Activated B cell treated with CpG ODN at 0.5 μM for 24 hours (primary cell): ENCODE measurements at regions of chr10 and their contacts with region 1.

Region 1: GRCh38 chr10:95693668-95694534 is at the start of gene TCTN3:
- DNase-seq: peak; percentile 87
- ATAC-seq: peak; percentile 94
- H3K4me3 Mint-ChIP-seq: peak within 1 kb of the TSS; percentile 98
- H3K27ac Mint-ChIP-seq: peak within 1 kb of the TSS; percentile 94
- H3K4me1 Mint-ChIP-seq: peaks cover 77% of the 10 kb centered on the region
- H3K27me3 Mint-ChIP-seq: no peaks in the 10 kb centered on the region
- CTCF ChIP-seq: peak; percentile 70
- total RNA-seq, gene TCTN3: 44.5 and 47.5 TPM in 2 replicates

Region 2: GRCh38 chr10:95374597-95375209 is 319.2 kb before region 1 on chr10:
- CTCF ChIA-PET with region 1: no interaction called
- POLR2A ChIA-PET with region 1: no interaction called
- intact Hi-C with region 1: no loop called
- DNase-seq: no peak
- ATAC-seq: peak; percentile 64
- H3K4me3 Mint-ChIP-seq: no peak overlapping the region
- H3K27ac Mint-ChIP-seq: no peak overlapping the region
- H3K4me1 Mint-ChIP-seq: no peaks in the 10 kb centered on the region
- H3K27me3 Mint-ChIP-seq: peaks cover 38% of the 10 kb centered on the region
- CTCF ChIP-seq: no peak

Region 3: DNA sequence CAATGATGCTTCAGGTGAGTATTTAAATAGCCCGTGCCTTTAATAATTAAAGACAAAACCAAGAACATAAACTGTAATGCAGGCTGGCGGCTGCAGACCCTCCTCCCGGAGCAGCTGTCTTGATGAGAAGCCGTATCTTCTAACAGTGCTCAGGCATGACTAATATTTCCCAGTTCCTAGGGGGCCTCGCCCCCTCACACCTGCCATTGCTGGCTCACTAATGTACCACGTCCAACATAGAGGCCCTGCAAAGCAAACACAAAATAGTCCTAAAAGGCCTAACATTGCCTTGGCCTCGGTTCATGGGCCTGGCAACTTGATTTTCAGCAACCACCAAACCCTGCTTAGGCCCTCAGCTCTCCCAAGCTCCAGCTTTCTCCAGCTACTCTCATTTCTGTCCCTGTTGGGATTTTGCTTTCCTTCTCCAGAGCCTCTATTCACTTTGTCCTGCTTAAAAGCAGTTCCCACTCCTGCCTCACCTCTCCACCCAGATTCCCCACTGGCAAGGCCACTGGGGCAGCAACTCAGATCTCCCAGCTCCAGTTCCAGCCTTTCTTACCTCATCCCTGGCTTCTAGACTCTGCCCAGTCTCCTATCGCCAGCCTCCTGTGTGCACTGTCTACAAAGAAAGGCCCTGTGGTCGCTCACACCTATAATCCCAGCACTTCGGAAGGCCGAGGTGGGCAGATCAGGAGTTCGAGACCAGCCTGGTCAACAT is 149.0 kb before region 1 on chr10:
- CTCF ChIA-PET with region 1: no interaction called
- POLR2A ChIA-PET with region 1: no interaction called
- intact Hi-C with region 1: no loop called
- DNase-seq: no peak
- ATAC-seq: no peak
- H3K4me3 Mint-ChIP-seq: no peak overlapping the region
- H3K27ac Mint-ChIP-seq: no peak overlapping the region
- H3K4me1 Mint-ChIP-seq: no peaks in the 10 kb centered on the region
- H3K27me3 Mint-ChIP-seq: peaks cover 25% of the 10 kb centered on the region
- CTCF ChIP-seq: no peak

Region 4: DNA sequence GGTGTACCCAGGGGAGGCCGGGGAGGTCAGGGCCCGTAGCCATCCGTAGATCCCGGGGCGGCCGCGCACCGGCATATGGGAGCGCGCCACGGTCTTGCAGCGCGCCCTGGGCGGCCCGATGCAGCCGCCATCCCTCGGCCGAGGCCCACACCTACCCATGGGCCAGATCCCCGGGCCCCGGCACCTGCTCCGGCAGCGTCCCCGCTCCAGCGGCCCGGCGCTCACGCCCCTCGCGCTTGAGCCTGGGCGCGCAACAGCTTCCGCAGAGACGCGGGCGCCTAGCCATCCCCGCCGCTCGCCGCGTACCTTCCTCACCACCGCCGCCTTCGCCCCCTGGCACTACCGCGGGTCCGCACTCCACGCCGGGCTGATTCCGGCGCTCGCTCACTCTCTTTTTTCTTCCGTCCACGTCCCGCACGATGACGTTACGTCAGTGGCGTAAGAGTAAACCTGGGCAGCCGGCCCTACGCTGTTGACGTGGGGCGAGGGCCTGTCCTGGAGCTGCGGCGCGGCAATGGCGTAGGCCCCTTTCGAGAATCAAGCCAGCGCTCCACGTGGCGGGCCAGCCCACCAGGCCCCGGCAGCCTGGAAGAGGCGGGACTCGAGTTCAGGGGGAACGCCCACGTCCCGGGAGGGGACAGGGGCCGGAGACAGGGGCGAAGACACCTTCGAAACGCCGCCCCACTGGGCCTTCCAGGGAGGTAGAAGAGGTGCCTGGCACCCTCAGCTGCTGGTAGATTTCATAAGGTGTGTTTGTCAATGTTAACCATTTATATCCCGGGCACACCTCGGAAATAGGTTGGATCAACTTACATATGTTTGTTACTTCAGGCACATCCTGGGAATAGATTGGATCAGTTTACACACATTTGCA is 37.4 kb before region 1 on chr10 and contains the start of gene ALDH18A1:
- CTCF ChIA-PET with region 1: interaction called, 3 read pairs
- POLR2A ChIA-PET with region 1: interaction called, 7 read pairs
- intact Hi-C with region 1: loop called (anchors 1 kb)
- DNase-seq: peak; percentile 94
- ATAC-seq: peak; percentile 96
- H3K4me3 Mint-ChIP-seq: peak within 1 kb of the TSS; percentile 98
- H3K27ac Mint-ChIP-seq: peak within 1 kb of the TSS; percentile 86
- H3K4me1 Mint-ChIP-seq: peaks cover 31% of the 10 kb centered on the region
- H3K27me3 Mint-ChIP-seq: no peaks in the 10 kb centered on the region
- CTCF ChIP-seq: no peak
- total RNA-seq, gene ALDH18A1: 45.9 and 53.0 TPM in 2 replicates

Region 5: GRCh38 chr10:95755511-95756004 is 61.7 kb after region 1 on chr10:
- CTCF ChIA-PET with region 1: interaction called, 82 read pairs
- POLR2A ChIA-PET with region 1: interaction called, 174 read pairs
- intact Hi-C with region 1: loop called (anchors 1 kb)
- DNase-seq: no peak
- ATAC-seq: no peak
- H3K4me3 Mint-ChIP-seq: peak overlapping the region; percentile 94
- H3K27ac Mint-ChIP-seq: peak overlapping the region; percentile 95
- H3K4me1 Mint-ChIP-seq: peaks cover 61% of the 10 kb centered on the region
- H3K27me3 Mint-ChIP-seq: no peaks in the 10 kb centered on the region
- CTCF ChIP-seq: no peak

Region 6: DNA sequence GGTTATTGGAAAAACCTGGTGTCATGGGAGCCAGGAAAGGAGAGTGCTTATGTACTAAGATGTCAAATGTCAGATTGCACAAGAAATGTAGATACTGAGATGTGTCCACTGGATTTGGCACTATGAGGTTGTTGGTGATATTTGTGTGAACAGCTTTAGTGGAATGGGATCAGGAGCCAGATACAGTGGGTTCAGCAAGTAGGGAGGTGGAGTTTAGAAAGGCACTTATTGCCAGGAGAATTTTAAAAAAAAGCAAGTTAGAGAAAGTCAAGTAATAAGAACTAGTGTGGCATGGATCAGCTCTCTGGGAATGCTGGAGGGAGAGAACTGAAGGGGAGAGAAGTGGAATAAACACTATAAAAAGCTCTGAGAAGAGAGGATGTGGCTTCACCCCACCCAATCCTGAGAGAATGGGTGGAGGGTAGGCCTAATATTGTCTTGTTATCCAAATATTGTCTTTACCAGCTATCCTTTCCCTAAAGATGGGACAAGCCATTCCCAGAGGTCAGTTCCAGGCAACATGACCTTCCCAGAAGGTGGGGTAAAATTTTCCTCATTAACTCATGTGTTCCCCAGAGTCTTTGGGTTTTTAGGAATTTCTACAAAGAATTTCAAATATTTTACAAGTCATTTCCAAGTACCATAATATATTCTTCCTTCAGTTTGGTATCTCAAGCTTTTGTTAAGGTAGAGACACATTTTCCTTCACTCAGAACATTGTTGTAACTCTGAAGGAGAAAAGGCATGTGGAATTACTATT is 104.4 kb after region 1 on chr10:
- CTCF ChIA-PET with region 1: interaction called, 18 read pairs
- POLR2A ChIA-PET with region 1: interaction called, 4 read pairs
- intact Hi-C with region 1: no loop called
- DNase-seq: no peak
- ATAC-seq: no peak
- H3K4me3 Mint-ChIP-seq: no peak overlapping the region
- H3K27ac Mint-ChIP-seq: peak overlapping the region; percentile 78
- H3K4me1 Mint-ChIP-seq: peaks cover 92% of the 10 kb centered on the region
- H3K27me3 Mint-ChIP-seq: no peaks in the 10 kb centered on the region
- CTCF ChIP-seq: no peak

Region 7: GRCh38 chr10:95832216-95833041 is 138.5 kb after region 1 on chr10:
- CTCF ChIA-PET with region 1: interaction called, 427 read pairs
- POLR2A ChIA-PET with region 1: interaction called, 237 read pairs
- intact Hi-C with region 1: no loop called
- DNase-seq: peak; percentile 52
- ATAC-seq: peak; percentile 88
- H3K4me3 Mint-ChIP-seq: peak overlapping the region; percentile 82
- H3K27ac Mint-ChIP-seq: peak overlapping the region; percentile 95
- H3K4me1 Mint-ChIP-seq: peaks cover 91% of the 10 kb centered on the region
- H3K27me3 Mint-ChIP-seq: no peaks in the 10 kb centered on the region
- CTCF ChIP-seq: no peak

Region 8: GRCh38 chr10:95873651-95874050 is 179.8 kb after region 1 on chr10:
- CTCF ChIA-PET with region 1: interaction called, 13 read pairs
- POLR2A ChIA-PET with region 1: interaction called, 3 read pairs
- intact Hi-C with region 1: no loop called
- DNase-seq: no peak
- ATAC-seq: no peak
- H3K4me3 Mint-ChIP-seq: no peak overlapping the region
- H3K27ac Mint-ChIP-seq: peak overlapping the region; percentile 73
- H3K4me1 Mint-ChIP-seq: peaks cover 10% of the 10 kb centered on the region
- H3K27me3 Mint-ChIP-seq: no peaks in the 10 kb centered on the region
- CTCF ChIP-seq: no peak